Kidney (tissue), 22 donors: ENCODE measurements at regions of chr15 and their contacts with region 1.

Region 1: GRCh38 chr15:26722621-26723160 is 50.2 kb downstream of the GABRB3 start:
- DNase-seq: no peak
- H3K4me3 ChIP-seq: no peak overlapping the region
- H3K27ac ChIP-seq: no peak overlapping the region
- H3K4me1 ChIP-seq: no peaks in the 10 kb centered on the region
- H3K27me3 ChIP-seq: no peaks in the 10 kb centered on the region
- CTCF ChIP-seq: no peak

Region 2: DNA sequence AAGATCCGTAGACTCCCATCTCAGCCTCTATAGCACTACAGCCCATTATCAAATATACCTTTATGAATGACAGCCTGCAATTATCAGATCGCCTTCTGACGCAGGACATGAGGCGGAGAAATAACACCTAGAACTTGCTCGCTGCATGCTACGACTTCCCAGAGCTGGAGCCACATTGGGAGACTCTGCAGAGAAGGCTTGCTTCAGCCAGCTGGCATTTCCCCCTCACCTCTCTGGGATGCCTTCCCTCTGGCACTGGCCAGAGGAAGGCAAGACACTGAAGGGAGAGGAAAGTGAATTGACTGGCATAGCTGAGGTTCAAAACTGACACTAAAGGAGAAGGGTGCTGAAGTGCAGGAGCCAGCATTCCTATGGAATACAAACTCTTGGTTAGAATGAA is 81.5 kb before region 1 on chr15:
- intact Hi-C with region 1: loop called (anchors 10 kb)
- DNase-seq: no peak
- H3K4me3 ChIP-seq: no peak overlapping the region
- H3K27ac ChIP-seq: no peak overlapping the region
- H3K4me1 ChIP-seq: no peaks in the 10 kb centered on the region
- H3K27me3 ChIP-seq: no peaks in the 10 kb centered on the region
- CTCF ChIP-seq: no peak

Region 3: GRCh38 chr15:26682601-26683164 is 40.0 kb before region 1 on chr15:
- intact Hi-C with region 1: no loop called
- DNase-seq: no peak
- H3K4me3 ChIP-seq: no peak overlapping the region
- H3K27ac ChIP-seq: no peak overlapping the region
- H3K4me1 ChIP-seq: no peaks in the 10 kb centered on the region
- H3K27me3 ChIP-seq: no peaks in the 10 kb centered on the region
- CTCF ChIP-seq: no peak